ENCODE measurements at regions of chr12 and their contacts with region 1.

Region 1: DNA sequence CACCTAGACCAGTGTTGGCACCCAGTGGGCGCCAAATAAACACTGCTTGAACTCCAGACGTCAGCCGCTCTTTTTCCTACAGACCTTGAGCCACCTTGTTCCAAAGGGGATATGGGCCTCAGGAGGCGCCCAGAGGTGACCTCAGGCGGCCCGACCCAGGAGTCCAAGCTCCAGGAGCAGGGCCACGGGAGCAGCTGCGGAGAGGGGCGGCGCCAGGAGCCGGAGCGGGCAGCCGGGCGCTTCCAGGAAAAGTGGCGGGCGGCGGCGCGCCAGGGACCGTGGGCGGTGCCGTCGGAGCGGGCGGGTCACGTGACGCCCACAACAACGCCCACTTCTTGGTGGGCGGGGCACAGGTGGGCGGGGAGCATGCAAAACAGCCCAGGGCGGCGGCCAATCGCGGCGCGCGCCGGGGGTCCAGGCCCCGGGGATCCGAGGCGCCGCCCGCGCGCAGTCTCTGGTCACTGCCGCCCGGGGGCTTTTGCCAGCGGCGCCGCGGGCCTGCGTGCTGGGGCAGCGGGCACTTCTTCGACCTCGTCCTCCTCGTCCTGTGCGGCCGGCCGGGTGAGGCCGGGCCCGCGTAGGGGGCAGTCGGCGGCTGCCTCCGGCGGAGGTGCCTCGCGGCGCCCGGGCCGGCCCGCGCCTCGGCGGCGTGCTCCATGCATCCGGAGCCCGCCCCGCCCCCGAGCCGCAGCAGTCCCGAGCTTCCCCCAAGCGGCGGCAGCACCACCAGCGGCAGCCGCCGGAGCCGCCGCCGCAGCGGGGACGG is at the start of gene ORAI1:
- DNase-seq: peak; percentile 93 to 98 (median 96)
- H3K4me3 ChIP-seq: peak within 1 kb of the TSS; percentile 88 to 96
- H3K4me3 Mint-ChIP-seq: peak within 1 kb of the TSS; percentile 96 to 98 (median 98)
- H3K27ac ChIP-seq: peak within 1 kb of the TSS; percentile 97
- H3K27ac Mint-ChIP-seq: peak within 1 kb of the TSS; percentile 96 to 100 (median 97)
- H3K4me1 ChIP-seq: peaks cover 46% of the 10 kb centered on the region
- H3K4me1 Mint-ChIP-seq: peaks cover 30 to 59% (median 39%) of the 10 kb centered on the region in 4 donors
- H3K27me3 ChIP-seq: no peaks in the 10 kb centered on the region
- H3K27me3 Mint-ChIP-seq: peaks cover 0 to 2% of the 10 kb centered on the region in 2 donors
- total RNA-seq, gene ORAI1: 48.8 to 51.7 TPM

Region 2: DNA sequence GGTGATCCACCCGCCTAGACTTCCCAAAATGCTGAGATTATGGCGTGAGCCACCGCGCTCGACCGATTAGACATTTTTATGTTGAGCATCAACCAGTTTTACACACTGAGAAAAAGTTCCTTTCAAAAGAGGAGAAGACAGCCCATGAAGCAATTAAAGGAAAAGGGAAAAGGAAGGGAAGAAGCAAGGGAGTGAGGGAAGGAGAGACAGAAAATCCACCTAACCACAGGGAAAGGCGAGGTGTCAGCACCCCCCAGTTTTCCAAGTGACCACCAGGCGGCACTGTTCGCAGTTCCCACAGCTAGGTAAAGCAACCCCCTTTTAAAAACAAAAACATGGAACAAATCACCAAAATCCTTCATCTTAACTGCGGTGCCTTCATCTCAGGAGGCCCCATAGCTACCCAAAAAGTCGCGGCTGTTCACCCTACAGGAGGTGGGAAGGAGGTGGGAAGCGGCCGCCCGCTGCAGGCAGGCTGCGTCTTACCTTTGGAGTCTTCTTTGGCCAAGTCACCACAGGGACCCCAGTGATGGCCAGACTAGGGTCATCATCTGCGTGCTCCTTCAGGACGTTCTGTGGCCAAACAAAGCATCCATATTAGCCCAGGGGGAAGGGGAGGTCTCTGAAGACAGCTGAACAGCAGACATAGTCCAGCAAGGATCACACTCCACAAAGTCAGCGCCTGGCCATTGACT is 132.0 kb before region 1 on chr12:
- CTCF ChIA-PET with region 1: interaction called, 11 read pairs
- POLR2A ChIA-PET with region 1: interaction called, 11 read pairs
- intact Hi-C with region 1: no loop called
- DNase-seq: peak; percentile 44 to 59 (median 56)
- H3K4me3 ChIP-seq: no peak overlapping the region
- H3K4me3 Mint-ChIP-seq: no peak overlapping the region
- H3K27ac ChIP-seq: no peak overlapping the region
- H3K27ac Mint-ChIP-seq: peak overlapping the region in 4 of 7 donors; percentile 41 to 93 (median 56)
- H3K4me1 ChIP-seq: peaks cover 12% of the 10 kb centered on the region
- H3K4me1 Mint-ChIP-seq: peaks cover 10 to 20% (median 15%) of the 10 kb centered on the region in 4 donors
- H3K27me3 ChIP-seq: no peaks in the 10 kb centered on the region
- H3K27me3 Mint-ChIP-seq: no peaks in the 10 kb centered on the region

Region 3: GRCh38 chr12:121536899-121537813 is 89.1 kb before region 1 on chr12:
- CTCF ChIA-PET with region 1: interaction called, 4 read pairs
- POLR2A ChIA-PET with region 1: interaction called, 22 read pairs
- intact Hi-C with region 1: loop called (anchors 1 kb)
- DNase-seq: peak; percentile 46 to 75 (median 48)
- H3K4me3 ChIP-seq: peak overlapping the region; percentile 29 to 55
- H3K4me3 Mint-ChIP-seq: peak overlapping the region; percentile 62 to 86 (median 82)
- H3K27ac ChIP-seq: peak overlapping the region; percentile 80
- H3K27ac Mint-ChIP-seq: peak overlapping the region; percentile 95 to 99 (median 95)
- H3K4me1 ChIP-seq: peaks cover 57% of the 10 kb centered on the region
- H3K4me1 Mint-ChIP-seq: peaks cover 29 to 69% (median 48%) of the 10 kb centered on the region in 4 donors
- H3K27me3 ChIP-seq: no peaks in the 10 kb centered on the region
- H3K27me3 Mint-ChIP-seq: no peaks in the 10 kb centered on the region

Region 4: GRCh38 chr12:121560392-121561008 is 65.8 kb before region 1 on chr12:
- CTCF ChIA-PET with region 1: interaction called, 230 read pairs
- POLR2A ChIA-PET with region 1: interaction called, 9 read pairs
- intact Hi-C with region 1: no loop called
- DNase-seq: no peak
- H3K4me3 ChIP-seq: no peak overlapping the region
- H3K4me3 Mint-ChIP-seq: no peak overlapping the region
- H3K27ac ChIP-seq: no peak overlapping the region
- H3K27ac Mint-ChIP-seq: peak overlapping the region in 6 of 7 donors; percentile 18 to 72 (median 38)
- H3K4me1 ChIP-seq: no peaks in the 10 kb centered on the region
- H3K4me1 Mint-ChIP-seq: peaks cover 7 to 18% (median 12%) of the 10 kb centered on the region in 4 donors
- H3K27me3 ChIP-seq: no peaks in the 10 kb centered on the region
- H3K27me3 Mint-ChIP-seq: no peaks in the 10 kb centered on the region

Region 5: GRCh38 chr12:121637231-121637914 is 11.1 kb after region 1 on chr12:
- CTCF ChIA-PET with region 1: interaction called, 63 read pairs
- POLR2A ChIA-PET with region 1: interaction called, 97 read pairs
- intact Hi-C with region 1: loop called (anchors 1 kb)
- DNase-seq: peak; percentile 36 to 64 (median 49)
- H3K4me3 ChIP-seq: peak overlapping the region in 1 of 2 donors; percentile 23
- H3K4me3 Mint-ChIP-seq: peak overlapping the region; percentile 13 to 84 (median 68)
- H3K27ac ChIP-seq: peak overlapping the region; percentile 59
- H3K27ac Mint-ChIP-seq: peak overlapping the region; percentile 89 to 93 (median 90)
- H3K4me1 ChIP-seq: peaks cover 58% of the 10 kb centered on the region
- H3K4me1 Mint-ChIP-seq: peaks cover 31 to 59% (median 44%) of the 10 kb centered on the region in 4 donors
- H3K27me3 ChIP-seq: no peaks in the 10 kb centered on the region
- H3K27me3 Mint-ChIP-seq: no peaks in the 10 kb centered on the region

Region 6: DNA sequence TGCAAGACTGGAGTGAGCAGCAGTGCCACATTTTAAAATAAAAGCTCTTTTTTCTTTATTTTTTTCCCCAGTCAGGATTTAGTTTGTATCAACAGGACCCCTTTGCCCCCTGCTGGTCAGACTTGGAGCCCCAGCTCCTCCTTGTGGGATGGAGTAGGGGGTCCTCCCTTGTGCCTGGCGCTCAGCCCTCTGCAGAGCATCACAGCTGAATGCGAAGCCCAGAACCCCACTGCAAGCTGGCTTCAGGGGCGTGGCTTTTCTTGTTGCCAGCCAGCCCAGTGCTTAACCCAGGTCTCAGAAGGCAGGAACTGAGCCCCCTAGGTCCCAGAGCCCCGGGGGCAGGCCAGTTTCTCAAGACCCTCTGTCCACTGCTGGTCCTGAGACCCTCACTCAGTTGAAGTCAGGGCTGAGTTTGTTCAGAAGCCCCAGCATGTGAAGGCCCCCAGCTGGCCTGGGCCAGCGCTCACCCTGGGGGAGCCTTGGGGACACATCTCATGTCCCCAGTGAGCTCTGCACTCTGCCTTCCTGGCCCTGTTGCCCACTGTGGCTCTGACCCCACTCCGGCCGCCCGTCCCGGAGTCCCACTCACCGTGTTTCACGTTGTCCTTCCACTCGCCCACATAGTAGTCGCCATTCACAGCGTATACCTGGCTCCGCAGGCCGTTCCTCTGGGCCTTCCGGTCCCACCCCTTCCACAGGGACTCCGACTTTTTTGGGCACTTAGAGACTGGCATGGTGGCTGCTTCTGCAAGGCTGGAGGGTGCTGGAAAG is 42.7 kb after region 1 on chr12:
- CTCF ChIA-PET with region 1: interaction called, 169 read pairs
- POLR2A ChIA-PET with region 1: interaction called, 305 read pairs
- intact Hi-C with region 1: loop called (anchors 1 kb)
- DNase-seq: peak; percentile 36 to 62 (median 48)
- H3K4me3 ChIP-seq: no peak overlapping the region
- H3K4me3 Mint-ChIP-seq: peak overlapping the region in 4 of 8 donors; percentile 21 to 62 (median 46)
- H3K27ac ChIP-seq: no peak overlapping the region
- H3K27ac Mint-ChIP-seq: peak overlapping the region; percentile 70 to 91 (median 84)
- H3K4me1 ChIP-seq: peaks cover 62% of the 10 kb centered on the region
- H3K4me1 Mint-ChIP-seq: peaks cover 26 to 71% (median 48%) of the 10 kb centered on the region in 4 donors
- H3K27me3 ChIP-seq: no peaks in the 10 kb centered on the region
- H3K27me3 Mint-ChIP-seq: no peaks in the 10 kb centered on the region

Region 7: GRCh38 chr12:121793838-121794533 is 167.7 kb after region 1 on chr12:
- CTCF ChIA-PET with region 1: interaction called, 3 read pairs
- POLR2A ChIA-PET with region 1: interaction called, 9 read pairs
- intact Hi-C with region 1: loop called (anchors 5 kb)
- DNase-seq: peak; percentile 94 to 98 (median 95)
- H3K4me3 ChIP-seq: peak overlapping the region; percentile 67 to 99
- H3K4me3 Mint-ChIP-seq: peak overlapping the region; percentile 78 to 94 (median 87)
- H3K27ac ChIP-seq: peak overlapping the region; percentile 97
- H3K27ac Mint-ChIP-seq: peak overlapping the region; percentile 97 to 99 (median 97)
- H3K4me1 ChIP-seq: peaks cover 64% of the 10 kb centered on the region
- H3K4me1 Mint-ChIP-seq: peaks cover 32 to 72% (median 54%) of the 10 kb centered on the region in 4 donors
- H3K27me3 ChIP-seq: no peaks in the 10 kb centered on the region
- H3K27me3 Mint-ChIP-seq: no peaks in the 10 kb centered on the region